PC-9 (cell line): ENCODE measurements at regions of chr6 and their contacts with region 1.

Region 1: DNA sequence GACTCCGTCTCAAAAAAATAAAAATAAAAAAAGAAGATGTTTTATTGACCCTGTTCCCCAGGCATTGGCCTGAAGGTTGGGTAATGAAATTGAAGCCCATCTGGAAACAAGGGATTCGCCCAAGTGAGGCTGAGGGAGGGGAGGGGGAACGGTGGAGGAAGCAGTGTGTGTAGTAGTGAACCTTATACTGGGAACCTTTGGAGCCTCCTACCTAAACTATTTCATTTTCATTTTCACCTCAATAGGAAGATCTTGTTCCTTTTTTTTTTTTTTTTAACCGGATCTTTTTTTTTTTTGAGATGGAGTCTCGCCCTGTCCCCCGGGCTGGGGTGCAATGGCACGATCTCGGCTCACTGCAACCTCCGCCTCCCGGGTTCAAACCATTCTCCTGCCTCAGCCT is 13.2 kb upstream of the ZBTB22 start:
- DNase-seq: no peak
- H3K4me3 ChIP-seq: no peak overlapping the region
- H3K27ac ChIP-seq: no peak overlapping the region
- H3K4me1 ChIP-seq: no peaks in the 10 kb centered on the region
- H3K27me3 ChIP-seq: no peaks in the 10 kb centered on the region
- CTCF ChIP-seq: no peak

Region 2: DNA sequence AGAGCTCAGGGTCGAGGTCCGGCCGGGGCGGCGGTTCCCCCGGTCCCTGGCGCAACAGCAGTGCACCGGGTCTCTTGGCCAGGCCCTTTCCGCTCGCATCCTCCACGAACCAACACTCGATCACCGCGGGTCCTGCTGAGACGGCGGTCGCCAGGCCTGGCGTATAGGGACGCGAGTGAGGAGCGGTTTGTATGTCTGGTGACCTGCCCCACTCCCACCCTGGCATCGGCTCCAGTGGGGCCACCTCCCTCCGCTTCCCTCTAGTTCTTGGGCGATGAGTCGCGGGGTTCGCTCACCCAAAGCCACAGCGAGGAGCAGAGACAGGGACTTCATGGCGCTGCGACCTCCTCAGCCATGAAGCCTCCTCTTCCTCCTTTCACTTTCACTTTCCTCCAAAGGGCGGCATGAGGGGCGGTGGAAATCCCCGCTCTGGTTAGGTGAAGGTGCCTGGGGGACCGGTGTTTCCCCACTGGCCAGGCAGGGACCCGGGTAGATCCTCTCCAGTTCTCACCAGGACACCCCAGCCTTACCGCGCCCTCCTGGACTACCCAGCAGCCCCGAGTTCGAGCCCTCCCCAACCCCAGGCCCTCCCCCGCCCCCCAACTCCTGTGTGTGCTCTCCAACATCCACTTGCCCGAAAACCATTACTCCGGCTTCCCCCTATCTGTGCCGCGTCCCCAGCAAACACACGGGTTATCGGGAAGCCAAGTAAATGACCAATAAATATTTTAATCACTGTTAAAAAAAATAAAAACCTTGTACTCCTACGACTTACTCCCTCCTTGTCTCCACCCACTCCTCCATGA is 16.8 kb before region 1 on chr6 and contains the start of gene TAPBP:
- CTCF ChIA-PET with region 1: no interaction called
- POLR2A ChIA-PET with region 1: no interaction called
- intact Hi-C with region 1: no loop called
- DNase-seq: peak; percentile 54 to 60
- H3K4me3 ChIP-seq: peak within 1 kb of the TSS; percentile 81
- H3K27ac ChIP-seq: peak within 1 kb of the TSS; percentile 72
- H3K4me1 ChIP-seq: peaks cover 27% of the 10 kb centered on the region
- H3K27me3 ChIP-seq: no peaks in the 10 kb centered on the region
- CTCF ChIP-seq: no peak
- total RNA-seq, gene TAPBP: 156 and 194 TPM in 2 replicates

Region 3: DNA sequence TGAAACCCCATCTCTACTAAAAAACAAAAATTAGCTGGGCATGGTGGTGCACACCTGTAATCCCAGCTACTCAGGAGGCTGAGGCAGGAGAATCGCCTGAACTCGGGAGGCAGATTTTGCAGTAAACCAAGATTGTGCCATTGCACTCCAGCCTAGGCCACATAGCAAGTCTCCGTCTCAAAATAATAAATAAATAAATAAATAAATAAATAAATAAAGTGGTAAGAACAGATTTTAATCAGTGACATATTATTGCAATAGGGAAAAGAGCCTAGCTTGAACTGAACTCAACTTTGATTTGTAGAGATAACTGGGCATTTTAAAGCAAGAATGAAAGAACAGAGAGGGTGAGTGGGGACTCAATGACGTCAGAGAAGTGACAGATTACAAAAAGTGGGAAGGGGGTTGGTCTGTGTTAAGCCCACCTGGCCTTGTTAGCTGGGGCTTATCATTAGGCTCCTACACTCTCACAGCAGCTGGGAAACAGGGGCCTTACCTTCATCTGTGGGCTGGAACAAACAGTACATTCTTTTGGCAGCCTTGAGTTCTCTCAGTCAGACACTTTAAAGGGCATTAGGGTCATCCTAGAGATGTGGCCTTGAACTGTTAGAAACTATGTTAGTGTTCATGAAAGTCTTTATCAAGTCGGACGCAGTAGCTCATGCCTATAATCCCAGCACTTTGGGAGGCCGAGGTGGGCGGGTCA is 36.4 kb after region 1 on chr6:
- CTCF ChIA-PET with region 1: no interaction called
- POLR2A ChIA-PET with region 1: interaction called, 20 read pairs
- intact Hi-C with region 1: no loop called
- DNase-seq: no peak
- H3K4me3 ChIP-seq: no peak overlapping the region
- H3K27ac ChIP-seq: no peak overlapping the region
- H3K4me1 ChIP-seq: peaks cover 17% of the 10 kb centered on the region
- H3K27me3 ChIP-seq: no peaks in the 10 kb centered on the region
- CTCF ChIP-seq: no peak